Activated naive CD4-positive, alpha-beta T cell treated with anti-CD3 and anti-CD28 coated beads for 36 hours (primary cell): ENCODE measurements at regions of chr2 and their contacts with region 1.

Region 1: DNA sequence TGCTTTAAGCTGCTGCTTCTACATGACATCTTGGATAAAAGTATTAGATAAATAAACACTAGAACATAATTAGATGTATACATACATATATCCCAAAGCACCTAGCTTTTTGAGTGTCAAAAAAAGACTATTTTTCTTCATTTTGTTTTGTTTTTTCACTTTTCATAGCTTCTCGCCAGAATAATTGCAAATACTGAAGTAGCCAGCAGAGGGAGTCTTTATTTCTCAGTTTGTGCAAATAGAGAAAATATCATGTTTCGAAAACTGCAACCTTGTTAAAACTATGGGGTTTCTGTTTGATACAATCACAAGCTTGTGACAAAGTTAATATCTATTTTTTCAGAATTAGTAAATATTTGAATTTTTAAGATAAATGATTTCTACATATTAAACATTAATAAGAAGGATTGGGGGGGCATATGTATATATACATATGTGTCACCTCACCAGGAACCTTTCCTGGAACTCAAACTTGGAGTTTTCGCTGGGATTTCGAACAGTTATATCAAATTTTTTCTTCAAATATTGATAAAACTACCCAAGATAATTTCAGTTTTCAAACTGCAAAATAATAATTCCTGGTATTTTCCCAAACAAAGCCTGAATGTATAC is 61.0 kb downstream of the GRB14 start:
- DNase-seq: no peak
- H3K4me3 Mint-ChIP-seq: no peak overlapping the region
- H3K27ac Mint-ChIP-seq: no peak overlapping the region
- H3K4me1 Mint-ChIP-seq: no peaks in the 10 kb centered on the region
- H3K27me3 Mint-ChIP-seq: no peaks in the 10 kb centered on the region

Region 2: GRCh38 chr2:164514231-164514907 is 45.9 kb before region 1 on chr2:
- CTCF ChIA-PET with region 1: no interaction called
- intact Hi-C with region 1: no loop called
- DNase-seq: no peak
- H3K4me3 Mint-ChIP-seq: no peak overlapping the region
- H3K27ac Mint-ChIP-seq: no peak overlapping the region
- H3K4me1 Mint-ChIP-seq: no peaks in the 10 kb centered on the region
- H3K27me3 Mint-ChIP-seq: no peaks in the 10 kb centered on the region

Region 3: DNA sequence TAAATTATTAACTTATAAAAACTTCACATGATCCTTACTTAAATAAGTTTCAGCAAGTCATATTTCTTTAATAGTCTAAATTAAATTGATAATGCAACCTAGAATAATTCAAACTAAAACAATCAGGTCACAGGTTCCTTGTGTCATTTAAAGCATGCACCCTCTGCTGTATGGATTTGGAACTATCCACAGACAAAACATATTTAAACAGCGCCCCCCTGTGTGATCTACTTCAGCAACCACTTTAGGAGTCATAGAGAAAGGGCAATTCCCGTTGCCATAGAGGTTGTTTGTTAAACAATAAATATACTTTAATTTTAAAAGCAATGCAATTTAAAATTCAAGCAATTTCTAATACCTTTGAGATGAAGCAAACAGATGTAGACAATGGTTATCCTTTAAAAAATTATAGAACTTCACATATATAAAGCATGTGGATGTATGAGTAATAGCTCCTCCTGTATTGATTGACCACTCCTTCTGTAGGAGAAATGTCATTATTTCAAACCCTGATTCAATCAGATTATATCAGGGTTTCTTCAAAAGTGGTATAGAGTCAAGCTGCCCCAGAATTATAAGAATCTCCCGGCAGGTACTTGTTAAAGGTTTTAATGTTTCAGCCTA is 39.8 kb after region 1 on chr2:
- CTCF ChIA-PET with region 1: no interaction called
- intact Hi-C with region 1: loop called (anchors 1 kb)
- DNase-seq: peak; percentile 21
- H3K4me3 Mint-ChIP-seq: no peak overlapping the region
- H3K27ac Mint-ChIP-seq: no peak overlapping the region
- H3K4me1 Mint-ChIP-seq: no peaks in the 10 kb centered on the region
- H3K27me3 Mint-ChIP-seq: no peaks in the 10 kb centered on the region

Region 4: DNA sequence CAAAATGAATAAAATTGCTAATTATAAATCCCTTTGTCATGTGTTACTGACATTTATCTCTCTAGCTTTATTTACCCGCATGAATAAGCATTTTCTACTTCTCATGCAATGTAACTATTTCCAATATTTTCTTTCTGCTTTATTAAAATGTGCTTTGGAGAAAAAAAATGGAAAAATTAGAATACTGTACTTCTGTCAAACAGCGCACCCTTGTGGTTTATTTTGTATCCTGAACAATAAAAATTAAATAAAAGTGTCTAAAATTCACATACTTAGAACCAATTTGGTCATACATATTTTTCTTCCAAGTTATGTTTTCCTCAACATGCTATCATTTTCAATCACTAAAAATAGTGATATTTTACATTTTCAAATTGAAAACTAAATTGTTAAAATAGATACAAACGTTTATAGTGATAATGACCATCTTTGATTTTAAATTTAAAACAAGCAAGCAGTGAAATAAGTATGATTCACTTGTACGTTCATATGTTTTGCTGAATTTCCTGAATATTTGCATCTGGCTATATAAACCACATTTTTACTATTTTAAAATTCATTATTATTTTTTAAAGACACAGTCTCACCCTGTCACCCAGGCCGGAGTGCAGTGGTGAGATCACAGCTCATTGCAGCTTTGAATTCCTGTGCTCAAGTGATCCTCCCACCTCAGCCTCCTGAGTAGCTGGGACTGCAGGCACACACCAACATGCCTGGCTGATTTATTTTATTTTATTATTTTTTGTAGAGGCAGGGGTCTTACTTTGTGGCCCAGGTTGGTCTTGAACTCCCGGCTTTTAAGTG is 156.9 kb after region 1 on chr2:
- CTCF ChIA-PET with region 1: interaction called, 4 read pairs
- intact Hi-C with region 1: loop called (anchors 2 kb)
- DNase-seq: no peak
- H3K4me3 Mint-ChIP-seq: no peak overlapping the region
- H3K27ac Mint-ChIP-seq: no peak overlapping the region
- H3K4me1 Mint-ChIP-seq: no peaks in the 10 kb centered on the region
- H3K27me3 Mint-ChIP-seq: no peaks in the 10 kb centered on the region